Activated CD4-positive, alpha-beta T cell treated with anti-CD3 and anti-CD28 coated beads for 36 hours (primary cell): ENCODE measurements at regions of chr1 and their contacts with region 1.

Region 1: DNA sequence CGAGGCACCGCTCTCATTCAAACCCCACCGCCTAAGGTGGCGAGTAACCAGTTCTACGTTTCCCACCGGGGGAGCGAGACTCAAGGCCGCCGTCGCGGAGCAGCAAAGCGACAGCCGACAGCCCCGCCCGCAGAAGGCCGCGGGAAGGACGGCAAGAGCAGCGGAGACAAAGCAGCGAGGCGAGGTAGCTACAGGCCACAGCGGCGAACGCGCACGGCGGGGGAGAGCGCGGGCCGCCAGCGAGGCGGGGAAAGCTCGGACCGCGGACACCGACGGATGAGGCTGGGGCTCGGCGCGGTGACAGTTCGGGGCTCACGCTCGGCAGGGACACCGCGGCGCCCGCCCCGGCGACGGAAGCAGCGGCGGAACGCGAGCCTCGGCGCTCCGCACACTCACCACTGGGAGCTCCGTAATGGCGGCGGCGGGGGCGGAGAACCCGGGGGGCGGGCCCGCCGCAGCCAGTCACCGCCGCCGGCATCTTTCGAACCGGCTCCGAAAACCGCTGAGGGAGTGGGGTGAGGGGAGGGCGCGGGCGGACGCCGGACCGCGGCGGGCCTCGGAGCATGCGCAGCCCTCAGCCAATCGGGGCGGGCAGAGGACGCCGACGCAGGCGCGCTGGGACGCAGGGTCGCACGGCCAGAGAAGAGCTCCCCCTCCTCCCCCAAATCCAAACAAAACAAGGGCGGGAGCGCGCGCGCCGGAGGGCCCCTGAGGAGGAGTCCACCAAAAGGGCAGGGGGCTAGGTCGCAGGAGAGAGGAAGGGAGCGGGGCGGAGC is 666 bp downstream of the HP1BP3 start:
- DNase-seq: peak; percentile 98
- ATAC-seq: peak; percentile 88
- H3K4me3 Mint-ChIP-seq: peak overlapping the region; percentile 96
- H3K27ac Mint-ChIP-seq: peak overlapping the region; percentile 96
- H3K4me1 Mint-ChIP-seq: peaks cover 29% of the 10 kb centered on the region
- H3K27me3 Mint-ChIP-seq: no peaks in the 10 kb centered on the region

Region 2: DNA sequence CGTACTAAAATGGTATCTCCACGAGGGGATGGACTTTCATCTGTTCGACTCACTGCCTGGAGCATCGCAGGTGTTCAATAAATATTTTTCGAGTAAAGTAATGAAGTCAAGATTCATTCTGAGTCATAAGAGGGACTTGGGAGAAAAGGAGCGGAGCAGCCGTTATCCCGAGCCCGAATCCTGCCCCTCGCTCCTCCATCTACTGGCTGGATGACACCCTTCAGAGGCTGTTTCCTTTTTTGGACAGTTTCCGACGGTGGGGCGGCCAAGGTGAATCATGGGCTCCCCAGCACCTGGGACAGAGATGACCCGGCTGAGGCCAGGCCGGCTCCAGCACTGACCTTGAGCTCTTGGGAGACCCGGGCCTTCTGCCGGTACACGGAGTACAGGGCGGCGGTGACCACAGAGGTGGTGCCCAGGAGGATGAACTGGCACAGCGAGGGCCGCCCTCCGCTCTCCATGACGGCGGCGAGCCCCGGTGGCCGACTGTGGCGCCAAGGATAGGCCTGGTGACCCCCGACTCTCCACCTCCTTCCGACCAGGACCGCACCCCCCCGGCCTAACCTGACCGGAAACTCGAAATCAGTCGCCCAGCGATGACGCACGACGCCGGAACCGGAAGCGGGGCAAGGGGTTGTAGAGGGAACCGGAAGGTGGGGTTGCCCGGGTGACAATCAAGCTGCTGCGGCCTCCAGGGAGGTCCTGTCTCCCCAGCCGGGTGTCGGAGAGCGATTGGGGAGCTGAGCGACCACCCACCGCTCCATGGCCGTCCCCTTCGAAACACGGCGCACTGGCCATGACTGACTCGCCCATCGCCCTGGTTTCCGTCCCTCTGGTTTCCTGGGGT is 278.7 kb before region 1 on chr1 and contains the start of gene MUL1:
- CTCF ChIA-PET with region 1: no interaction called
- POLR2A ChIA-PET with region 1: no interaction called
- intact Hi-C with region 1: loop called in 1 of 2 experiments (anchors 5 kb)
- DNase-seq: peak; percentile 96
- ATAC-seq: peak; percentile 96
- H3K4me3 Mint-ChIP-seq: peak within 1 kb of the TSS; percentile 79
- H3K27ac Mint-ChIP-seq: peak within 1 kb of the TSS; percentile 65
- H3K4me1 Mint-ChIP-seq: peaks cover 17% of the 10 kb centered on the region
- H3K27me3 Mint-ChIP-seq: peaks cover 2% of the 10 kb centered on the region
- total RNA-seq, gene MUL1: 9.0 to 13.1 TPM

Region 3: GRCh38 chr1:20696397-20697329 is 89.8 kb before region 1 on chr1:
- CTCF ChIA-PET with region 1: interaction called, 6 read pairs
- POLR2A ChIA-PET with region 1: no interaction called
- intact Hi-C with region 1: loop called in 1 of 2 experiments (anchors 1 kb)
- DNase-seq: peak; percentile 89
- ATAC-seq: peak; percentile 98
- H3K4me3 Mint-ChIP-seq: peak overlapping the region; percentile 78
- H3K27ac Mint-ChIP-seq: peak overlapping the region; percentile 65
- H3K4me1 Mint-ChIP-seq: peaks cover 2% of the 10 kb centered on the region
- H3K27me3 Mint-ChIP-seq: no peaks in the 10 kb centered on the region

Region 4: GRCh38 chr1:20727384-20728316 is 58.8 kb before region 1 on chr1:
- CTCF ChIA-PET with region 1: no interaction called
- POLR2A ChIA-PET with region 1: no interaction called
- intact Hi-C with region 1: no loop called
- DNase-seq: no peak
- ATAC-seq: no peak
- H3K4me3 Mint-ChIP-seq: no peak overlapping the region
- H3K27ac Mint-ChIP-seq: no peak overlapping the region
- H3K4me1 Mint-ChIP-seq: peaks cover 7% of the 10 kb centered on the region
- H3K27me3 Mint-ChIP-seq: peaks cover 21% of the 10 kb centered on the region

Region 5: GRCh38 chr1:20913242-20913641 is 126.8 kb after region 1 on chr1:
- CTCF ChIA-PET with region 1: no interaction called
- POLR2A ChIA-PET with region 1: no interaction called
- intact Hi-C with region 1: no loop called
- DNase-seq: no peak
- ATAC-seq: no peak
- H3K4me3 Mint-ChIP-seq: no peak overlapping the region
- H3K27ac Mint-ChIP-seq: no peak overlapping the region
- H3K4me1 Mint-ChIP-seq: no peaks in the 10 kb centered on the region
- H3K27me3 Mint-ChIP-seq: no peaks in the 10 kb centered on the region

Region 6: GRCh38 chr1:20932437-20932977 is 146.1 kb after region 1 on chr1:
- CTCF ChIA-PET with region 1: no interaction called
- POLR2A ChIA-PET with region 1: interaction called, 4 read pairs
- intact Hi-C with region 1: loop called (anchors 1 to 5 kb)
- DNase-seq: peak; percentile 65
- ATAC-seq: peak; percentile 84
- H3K4me3 Mint-ChIP-seq: peak overlapping the region; percentile 13
- H3K27ac Mint-ChIP-seq: peak overlapping the region; percentile 91
- H3K4me1 Mint-ChIP-seq: peaks cover 37% of the 10 kb centered on the region
- H3K27me3 Mint-ChIP-seq: no peaks in the 10 kb centered on the region

Region 7: DNA sequence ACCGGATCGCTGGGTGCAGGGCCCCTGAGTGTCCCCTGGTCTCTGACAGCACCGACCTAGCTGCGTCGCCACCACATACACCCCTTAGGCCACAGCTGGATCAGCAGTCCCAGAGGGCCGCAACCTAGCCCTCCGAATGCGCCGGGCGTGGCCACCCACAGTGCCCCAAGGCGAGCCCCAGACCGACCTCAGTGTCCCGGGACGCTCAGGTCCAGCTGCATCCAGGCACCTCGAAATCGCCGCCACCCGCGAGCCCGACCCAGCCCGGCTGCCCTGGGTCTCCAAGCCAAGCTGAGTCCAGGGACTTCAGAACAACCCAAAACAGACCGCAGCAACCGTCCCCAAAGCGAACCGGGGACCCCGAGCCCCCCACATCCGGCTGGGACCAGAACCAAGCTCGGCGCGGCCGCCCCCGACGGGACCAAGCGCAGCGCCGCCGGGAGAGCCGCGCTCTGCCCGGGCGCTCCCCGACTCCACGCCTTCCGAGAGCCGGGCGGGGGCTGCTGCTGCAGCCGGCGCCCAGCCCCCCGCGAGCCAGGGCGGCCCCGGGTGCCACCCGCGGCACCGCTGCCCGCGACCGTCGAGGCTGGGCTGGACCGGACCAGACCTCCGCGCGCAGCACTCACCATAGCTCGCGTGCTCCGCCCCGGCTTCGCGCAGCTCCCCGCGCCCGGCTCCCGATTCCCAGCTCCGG is 558.5 kb after region 1 on chr1:
- CTCF ChIA-PET with region 1: interaction called, 3 read pairs
- POLR2A ChIA-PET with region 1: interaction called, 8 read pairs
- intact Hi-C with region 1: loop called in 1 of 2 experiments (anchors 2 kb)
- DNase-seq: peak; percentile 44
- ATAC-seq: peak; percentile 17
- H3K4me3 Mint-ChIP-seq: no peak overlapping the region
- H3K27ac Mint-ChIP-seq: peak overlapping the region; percentile 95
- H3K4me1 Mint-ChIP-seq: peaks cover 39% of the 10 kb centered on the region
- H3K27me3 Mint-ChIP-seq: no peaks in the 10 kb centered on the region

Region 8: GRCh38 chr1:21937372-21938221 is 1151.2 kb after region 1 on chr1:
- CTCF ChIA-PET with region 1: no interaction called
- POLR2A ChIA-PET with region 1: no interaction called
- intact Hi-C with region 1: loop called in 1 of 2 experiments (anchors 5 kb)
- DNase-seq: peak; percentile 79
- ATAC-seq: peak; percentile 80
- H3K4me3 Mint-ChIP-seq: peak overlapping the region; percentile 74
- H3K27ac Mint-ChIP-seq: peak overlapping the region; percentile 80
- H3K4me1 Mint-ChIP-seq: peaks cover 20% of the 10 kb centered on the region
- H3K27me3 Mint-ChIP-seq: peaks cover 10% of the 10 kb centered on the region